ENCODE measurements at regions of chr21 and their contacts with region 1.

Region 1: GRCh38 chr21:34345091-34345871 is 18.5 kb upstream of the KCNE2 start:
- DNase-seq: no peak

Region 2: DNA sequence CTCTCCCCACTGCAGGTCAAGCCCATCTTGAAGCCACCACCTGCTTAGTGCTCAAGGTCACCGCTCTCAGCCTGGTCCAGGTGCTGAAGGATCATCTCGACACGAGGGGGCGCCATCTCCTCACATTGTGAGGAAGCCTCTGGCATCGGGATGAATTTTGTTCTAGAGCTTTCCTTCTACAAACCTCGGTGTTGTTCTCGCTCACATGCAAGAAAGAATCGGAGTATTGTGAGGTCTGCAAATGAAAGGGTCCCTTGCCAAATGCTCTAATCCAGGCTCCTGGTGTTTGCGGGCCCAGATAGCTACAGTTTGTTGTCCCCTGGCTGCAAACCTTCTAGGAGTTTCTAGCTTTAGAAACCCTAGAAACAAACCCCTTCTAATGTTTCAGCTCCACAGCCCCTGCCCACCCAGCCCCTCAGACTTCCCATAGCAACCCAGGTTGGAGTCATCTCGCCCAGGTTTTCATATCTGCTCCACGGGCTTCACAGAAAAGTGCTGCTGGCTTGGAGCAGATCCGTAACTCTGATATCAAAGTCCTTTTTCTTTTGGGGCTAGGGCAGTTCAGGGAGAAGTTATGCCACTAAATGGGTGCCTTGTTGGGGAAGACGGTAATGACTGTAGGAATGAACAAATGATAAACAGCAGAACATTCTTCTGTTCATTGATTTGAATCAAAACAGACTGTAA is 421.1 kb before region 1 on chr21:
- intact Hi-C with region 1: loop called (anchors 5 kb)
- DNase-seq: peak; percentile 96

Region 3: DNA sequence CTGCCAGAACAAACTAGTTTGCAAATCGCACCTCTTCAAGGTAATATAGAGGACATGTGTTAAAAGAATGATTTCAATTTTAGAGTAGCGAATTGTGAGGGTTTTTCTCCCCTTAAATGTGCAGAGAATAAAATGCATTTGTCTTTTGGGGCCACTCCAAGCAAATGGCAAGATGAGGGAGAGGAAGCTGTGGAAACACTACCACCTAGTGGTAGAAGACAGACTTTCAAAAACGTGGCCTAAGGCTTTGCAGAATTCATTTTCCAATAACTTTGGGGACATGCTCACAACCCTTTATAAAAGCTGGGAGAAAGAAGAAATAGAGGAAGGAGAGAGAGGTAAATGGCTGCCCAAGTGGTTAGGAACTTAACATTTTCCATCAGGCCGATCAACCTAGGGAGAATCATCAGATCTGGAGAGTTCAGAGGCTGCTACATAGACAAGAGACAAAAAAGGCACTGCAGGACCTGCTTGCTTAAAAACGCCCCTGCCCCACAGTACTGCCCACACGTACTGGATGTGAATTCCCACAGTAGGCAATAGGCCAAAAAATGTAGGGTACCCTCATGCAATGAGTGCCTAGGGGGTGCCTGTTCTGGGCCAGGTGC is 285.4 kb after region 1 on chr21:
- intact Hi-C with region 1: no loop called
- DNase-seq: no peak

Measured in posterior vena cava (tissue), 2 donors.